Heart right ventricle (tissue), 16 donors: ENCODE measurements at regions of chr2 and their contacts with region 1.

Region 1: GRCh38 chr2:232133078-232133477 is 171.6 kb downstream of the DIS3L2 start:
- DNase-seq: no peak
- ATAC-seq: no peak
- H3K4me3 ChIP-seq: no peak overlapping the region
- H3K27ac ChIP-seq: no peak overlapping the region
- H3K4me1 ChIP-seq: peaks cover 0 to 15% (median 4%) of the 10 kb centered on the region in 9 donors
- H3K27me3 ChIP-seq: no peaks in the 10 kb centered on the region
- CTCF ChIP-seq: no peak

Region 2: DNA sequence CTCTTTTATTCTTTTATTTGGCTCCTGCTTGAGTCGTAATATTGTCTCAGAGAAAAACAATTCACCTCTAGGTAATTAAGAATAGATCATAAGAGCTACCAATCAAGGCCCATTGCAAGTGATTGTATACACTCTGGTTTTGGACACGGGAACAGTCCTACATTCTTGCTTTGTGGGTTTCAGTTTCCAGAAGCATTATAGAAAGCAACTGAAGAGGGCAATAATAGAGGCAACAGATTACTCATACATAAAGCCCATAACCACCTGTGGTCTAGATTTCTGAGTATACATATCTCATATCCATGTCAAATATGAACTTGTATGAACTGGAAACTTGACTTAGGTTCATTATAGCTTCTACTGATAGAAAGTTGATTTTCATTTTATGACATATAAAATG is 106.2 kb before region 1 on chr2:
- intact Hi-C with region 1: loop called in 1 of 10 experiments (anchors 10 kb)
- DNase-seq: no peak
- ATAC-seq: no peak
- H3K4me3 ChIP-seq: no peak overlapping the region
- H3K27ac ChIP-seq: no peak overlapping the region
- H3K4me1 ChIP-seq: peaks cover 0 to 27% (median 11%) of the 10 kb centered on the region in 9 donors
- H3K27me3 ChIP-seq: no peaks in the 10 kb centered on the region
- CTCF ChIP-seq: no peak

Region 3: GRCh38 chr2:232315049-232315922 is 182.2 kb after region 1 on chr2:
- intact Hi-C with region 1: loop called in 1 of 10 experiments (anchors 5 kb)
- DNase-seq: peak in 1 of 2 donors; percentile 49
- ATAC-seq: peak; percentile 51 to 78 (median 72)
- H3K4me3 ChIP-seq: no peak overlapping the region
- H3K27ac ChIP-seq: peak overlapping the region in 7 of 10 donors; percentile 31 to 94 (median 57)
- H3K4me1 ChIP-seq: peaks cover 4 to 63% (median 30%) of the 10 kb centered on the region in 9 donors
- H3K27me3 ChIP-seq: no peaks in the 10 kb centered on the region
- CTCF ChIP-seq: peak in 3 of 9 donors; percentile 6 to 33 (median 6)